Endothelial cell of umbilical vein (primary cell): ENCODE measurements at regions of chr2 and their contacts with region 1.

Region 1: GRCh38 chr2:21070341-21071257 is 26.7 kb upstream of the APOB start:
- DNase-seq: peak; percentile 84
- H3K4me3 ChIP-seq: no peak overlapping the region
- H3K27ac ChIP-seq: peak overlapping the region; percentile 66
- H3K4me1 ChIP-seq: peaks cover 14% of the 10 kb centered on the region
- H3K27me3 ChIP-seq: no peaks in the 10 kb centered on the region
- CTCF ChIP-seq: no peak
- POLR2A ChIP-seq: peak; percentile 50

Region 2: GRCh38 chr2:21083482-21083881 is 12.9 kb after region 1 on chr2:
- CTCF ChIA-PET with region 1: no interaction called
- POLR2A ChIA-PET with region 1: no interaction called
- dilution Hi-C with region 1: no loop called
- intact Hi-C with region 1: no loop called
- DNase-seq: no peak
- H3K4me3 ChIP-seq: no peak overlapping the region
- H3K27ac ChIP-seq: no peak overlapping the region
- H3K4me1 ChIP-seq: no peaks in the 10 kb centered on the region
- H3K27me3 ChIP-seq: no peaks in the 10 kb centered on the region
- CTCF ChIP-seq: no peak
- POLR2A ChIP-seq: no peak

Region 3: DNA sequence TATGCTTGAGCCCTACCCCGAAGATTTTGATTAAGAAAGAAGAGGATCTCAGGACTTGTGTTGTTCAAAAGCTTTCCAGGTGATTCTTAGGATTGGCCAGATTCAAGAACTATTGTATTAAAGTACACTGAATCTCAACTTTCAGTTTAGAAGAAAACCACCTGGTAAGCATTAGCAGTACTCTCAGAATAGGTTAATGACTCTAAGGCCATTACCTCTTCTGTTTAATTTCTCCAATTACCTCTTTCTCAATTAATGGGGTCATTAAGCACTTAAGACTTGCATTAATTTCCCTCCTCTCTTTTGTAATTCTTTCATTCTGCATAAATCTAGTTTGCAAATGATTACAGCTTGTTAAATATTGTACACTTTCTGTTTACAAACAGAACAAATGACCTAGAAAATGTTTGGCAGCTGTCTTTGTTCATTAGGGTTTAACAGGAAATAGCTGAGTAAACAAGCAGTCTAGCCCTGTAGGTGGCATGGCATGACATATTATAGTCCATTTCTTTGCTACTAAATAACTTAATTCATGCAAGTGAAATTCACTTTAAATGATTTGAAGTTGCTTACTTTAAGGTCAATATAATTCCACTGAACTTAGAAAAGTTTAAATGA is 32.8 kb after region 1 on chr2:
- CTCF ChIA-PET with region 1: no interaction called
- POLR2A ChIA-PET with region 1: no interaction called
- dilution Hi-C with region 1: no loop called
- intact Hi-C with region 1: loop called (anchors 1 kb)
- DNase-seq: peak; percentile 60
- H3K4me3 ChIP-seq: no peak overlapping the region
- H3K27ac ChIP-seq: no peak overlapping the region
- H3K4me1 ChIP-seq: peaks cover 4% of the 10 kb centered on the region
- H3K27me3 ChIP-seq: no peaks in the 10 kb centered on the region
- CTCF ChIP-seq: no peak
- POLR2A ChIP-seq: no peak

Region 4: DNA sequence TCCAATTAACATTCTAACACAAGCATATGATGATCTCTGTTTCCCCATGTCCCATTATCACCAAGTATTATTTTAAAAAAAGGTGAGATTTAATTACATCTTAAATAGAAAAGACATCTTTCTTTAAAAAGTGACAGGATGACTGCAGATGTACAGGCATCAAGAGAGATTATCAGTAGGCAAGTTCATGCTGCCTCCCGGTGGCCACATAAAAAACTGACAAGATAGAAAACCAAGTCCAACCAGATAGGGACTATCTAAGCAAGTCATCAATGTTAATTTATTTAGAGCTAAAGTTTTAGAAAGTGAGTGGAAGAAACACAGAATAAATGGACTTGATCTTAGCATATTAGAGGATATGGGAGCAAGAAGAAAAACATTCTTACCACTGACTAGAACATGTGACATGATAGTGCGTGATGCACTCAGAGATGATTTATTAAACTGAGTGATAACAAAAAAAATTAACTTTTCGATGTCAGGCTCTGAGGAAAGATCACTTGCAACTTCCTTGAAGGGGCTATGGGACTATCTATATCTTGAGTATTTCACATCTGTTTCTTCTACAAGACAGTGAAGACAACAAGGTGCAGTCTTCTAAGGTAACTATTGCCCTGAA is 47.8 kb after region 1 on chr2:
- CTCF ChIA-PET with region 1: interaction called, 7 read pairs
- POLR2A ChIA-PET with region 1: no interaction called
- dilution Hi-C with region 1: no loop called
- intact Hi-C with region 1: loop called (anchors 2 kb)
- DNase-seq: peak; percentile 59
- H3K4me3 ChIP-seq: no peak overlapping the region
- H3K27ac ChIP-seq: no peak overlapping the region
- H3K4me1 ChIP-seq: no peaks in the 10 kb centered on the region
- H3K27me3 ChIP-seq: no peaks in the 10 kb centered on the region
- CTCF ChIP-seq: peak; percentile 18 to 45
- POLR2A ChIP-seq: no peak